Transverse colon (tissue), 4 donors: ENCODE measurements at regions of chr15 and their contacts with region 1.

Region 1: DNA sequence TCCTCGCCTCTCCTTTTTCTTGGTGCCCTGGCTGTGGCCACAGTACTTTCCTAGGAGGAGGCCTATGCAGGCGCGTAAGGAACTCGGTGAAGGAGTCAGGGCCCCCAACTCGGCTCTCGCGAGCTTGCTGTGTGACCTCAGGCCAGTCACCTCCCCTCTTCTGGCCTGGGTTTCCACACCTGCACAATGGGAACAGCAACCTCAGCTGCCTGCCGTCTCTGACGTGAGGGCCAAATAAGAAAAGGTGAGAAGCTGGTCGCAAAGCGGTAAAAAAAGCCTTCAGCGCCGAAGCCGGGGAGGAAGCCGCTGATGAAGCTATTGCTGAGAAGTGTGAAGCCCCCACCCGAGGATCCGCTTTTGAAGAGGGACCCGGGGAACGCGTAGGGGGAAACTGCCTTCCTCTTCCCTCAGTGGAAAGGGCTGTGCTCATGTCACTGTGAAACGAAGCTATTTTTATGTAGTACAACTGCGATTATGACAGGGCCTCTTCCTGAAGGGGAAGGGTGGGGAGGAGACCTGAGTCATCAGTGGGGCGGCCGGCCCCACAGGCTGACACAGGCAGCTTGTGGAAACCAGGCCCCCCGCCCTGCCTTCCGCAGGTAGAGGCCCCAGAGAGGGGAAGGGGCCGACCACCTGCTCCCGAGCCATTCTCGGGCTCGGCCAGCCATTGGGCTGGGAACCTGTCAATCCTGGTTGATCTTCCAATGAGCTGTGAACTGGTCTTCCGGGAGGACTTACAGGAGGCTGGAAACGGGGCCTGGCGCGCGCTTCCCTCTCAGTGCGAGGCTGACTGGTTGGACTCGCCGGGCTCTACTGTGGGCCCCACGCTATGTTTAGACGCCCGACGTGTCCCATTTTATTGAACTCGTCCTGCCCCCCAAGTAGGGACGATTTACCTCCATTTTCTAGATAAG is 18.0 kb upstream of the ANKDD1A start:
- DNase-seq: peak; percentile 92
- H3K4me3 ChIP-seq: peak overlapping the region in 2 of 4 donors; percentile 9
- H3K27ac ChIP-seq: peak overlapping the region; percentile 79 to 90 (median 86)
- H3K4me1 ChIP-seq: peaks cover 8 to 58% (median 15%) of the 10 kb centered on the region in 4 donors
- H3K27me3 ChIP-seq: no peaks in the 10 kb centered on the region
- CTCF ChIP-seq: no peak
- EP300 ChIP-seq: no peak
- POLR2A ChIP-seq: peak; percentile 61

Region 2: DNA sequence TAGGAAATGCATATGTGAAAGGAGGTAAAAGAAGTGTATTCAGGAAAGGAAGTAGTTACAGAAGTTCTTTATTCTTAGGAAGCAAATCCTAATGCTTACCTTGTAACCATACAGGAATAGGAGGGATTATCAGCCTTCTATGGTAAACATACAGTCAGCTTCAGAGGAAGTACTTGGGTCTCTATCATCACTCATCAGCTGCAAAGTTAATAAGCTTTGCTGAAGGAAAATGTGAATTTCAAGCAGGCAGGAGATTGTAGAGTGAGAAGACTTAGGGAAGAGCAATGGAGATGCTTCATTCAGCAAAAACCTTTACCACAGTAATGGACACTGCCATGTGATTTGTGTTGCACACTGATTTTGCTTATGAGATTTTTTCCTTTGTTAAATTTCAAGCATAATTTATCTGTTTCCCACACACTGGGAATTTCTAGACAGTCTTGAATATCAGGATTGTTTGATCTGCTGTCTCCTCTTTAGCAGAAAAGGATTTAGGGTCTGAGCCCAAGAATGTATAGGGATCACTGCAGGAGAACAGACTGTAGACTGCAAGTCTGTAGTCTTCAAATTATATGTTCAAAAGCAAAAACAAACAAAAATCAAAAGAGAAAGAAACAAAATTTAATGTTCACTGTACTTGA is 282.5 kb before region 1 on chr15:
- in situ Hi-C with region 1: no loop called
- intact Hi-C with region 1: no loop called
- DNase-seq: no peak
- H3K4me3 ChIP-seq: no peak overlapping the region
- H3K27ac ChIP-seq: no peak overlapping the region
- H3K4me1 ChIP-seq: peaks cover 0 to 14% (median 3%) of the 10 kb centered on the region in 4 donors
- H3K27me3 ChIP-seq: no peaks in the 10 kb centered on the region
- CTCF ChIP-seq: no peak
- EP300 ChIP-seq: no peak
- POLR2A ChIP-seq: no peak

Region 3: DNA sequence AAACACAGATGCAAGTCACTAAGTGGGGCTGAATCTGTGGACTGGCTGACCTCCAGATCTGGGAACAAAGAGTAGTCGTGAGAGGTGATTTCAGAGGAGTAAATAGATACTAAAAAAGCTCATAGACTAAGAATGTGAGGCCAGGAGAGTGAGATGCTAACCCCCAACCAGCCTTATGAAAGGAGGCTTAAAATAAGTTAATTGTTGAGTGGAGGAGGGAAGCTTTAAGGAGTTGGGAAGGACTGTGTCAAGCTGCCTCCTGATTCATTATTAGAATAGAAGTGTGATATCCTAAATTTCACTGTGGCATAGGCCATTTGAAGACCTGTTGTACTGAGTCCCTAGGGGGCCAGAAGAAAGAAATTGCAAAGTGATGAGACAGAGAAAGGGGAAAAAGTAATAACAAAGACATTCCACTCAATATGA is 226.0 kb before region 1 on chr15:
- in situ Hi-C with region 1: no loop called
- intact Hi-C with region 1: no loop called
- DNase-seq: no peak
- H3K4me3 ChIP-seq: no peak overlapping the region
- H3K27ac ChIP-seq: no peak overlapping the region
- H3K4me1 ChIP-seq: peaks cover 0 to 15% (median 4%) of the 10 kb centered on the region in 4 donors
- H3K27me3 ChIP-seq: no peaks in the 10 kb centered on the region
- CTCF ChIP-seq: no peak
- EP300 ChIP-seq: no peak
- POLR2A ChIP-seq: no peak

Region 4: DNA sequence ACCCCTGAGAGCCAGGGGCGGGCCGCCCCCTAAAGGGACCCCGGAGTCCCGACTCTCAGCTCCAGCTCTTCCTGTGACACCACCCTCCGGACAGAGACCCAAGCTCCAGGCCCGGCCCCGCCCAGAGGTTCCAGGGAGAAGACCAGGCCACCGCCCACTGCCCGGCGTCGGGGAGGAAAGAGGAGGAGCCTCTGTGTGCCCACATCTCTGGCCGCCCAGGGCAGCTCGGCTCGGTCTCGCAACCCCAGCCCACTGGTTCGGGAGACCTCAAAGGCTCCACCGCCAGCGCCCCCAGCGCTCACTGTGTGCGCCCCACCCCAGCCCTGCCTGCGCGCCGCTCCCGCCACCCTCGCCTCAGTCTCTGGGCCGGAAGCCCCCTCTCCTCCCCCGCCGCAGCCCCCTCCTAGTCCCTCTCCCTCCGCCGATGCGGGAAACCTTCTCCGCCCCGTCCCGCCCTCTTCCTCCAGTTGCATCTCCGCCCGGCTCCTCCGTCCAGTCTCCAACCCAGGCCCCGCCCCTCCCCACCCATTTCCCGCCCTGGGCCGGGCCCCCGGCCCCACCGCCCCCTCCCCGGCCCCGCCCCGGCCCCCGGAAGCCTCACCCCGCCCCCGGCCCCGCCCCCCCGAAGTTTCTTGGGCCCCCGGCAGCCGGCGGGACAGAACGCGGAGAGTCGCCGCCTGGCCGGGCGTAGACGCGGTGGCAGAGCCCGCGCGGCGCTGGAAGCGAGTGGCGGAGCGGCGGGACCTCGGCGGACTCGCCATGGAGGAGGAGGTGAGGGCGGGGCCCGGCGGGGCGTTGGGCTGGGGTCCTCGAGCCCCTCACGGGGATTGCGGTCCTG is 52.3 kb before region 1 on chr15 and contains the start of gene PLEKHO2:
- in situ Hi-C with region 1: loop called in 1 of 4 experiments (anchors 10 kb)
- intact Hi-C with region 1: no loop called
- DNase-seq: peak; percentile 95
- H3K4me3 ChIP-seq: peak within 1 kb of the TSS; percentile 69 to 100 (median 88)
- H3K27ac ChIP-seq: peak within 1 kb of the TSS; percentile 89 to 96 (median 94)
- H3K4me1 ChIP-seq: peaks cover 11 to 48% (median 26%) of the 10 kb centered on the region in 4 donors
- H3K27me3 ChIP-seq: peaks cover 3% of the 10 kb centered on the region
- CTCF ChIP-seq: peak in 1 of 5 experiments; percentile 6
- EP300 ChIP-seq: no peak
- POLR2A ChIP-seq: peak; percentile 72
- total RNA-seq, gene PLEKHO2: 4.6 to 12.3 (median 9.8) TPM

Region 5: DNA sequence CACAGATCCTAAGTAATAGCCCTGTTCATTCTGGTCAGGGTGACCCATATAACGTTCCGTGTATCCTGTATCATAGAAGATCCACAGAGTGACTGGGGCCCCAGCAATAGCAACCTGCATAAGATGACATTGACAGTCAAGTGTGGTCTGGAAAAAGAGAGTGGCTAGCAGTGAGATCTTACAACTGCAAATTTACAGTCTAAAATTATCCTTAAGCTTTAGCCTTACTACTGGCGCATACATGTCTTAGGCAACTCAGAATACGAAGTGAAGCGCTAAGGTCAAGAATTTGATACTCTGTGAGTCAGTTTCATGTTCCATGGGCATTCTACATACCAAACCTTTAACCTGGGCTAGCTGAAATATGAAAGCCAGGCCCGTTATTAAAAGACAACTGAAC is 558.3 kb after region 1 on chr15:
- in situ Hi-C with region 1: no loop called
- intact Hi-C with region 1: no loop called
- DNase-seq: no peak
- H3K4me3 ChIP-seq: no peak overlapping the region
- H3K27ac ChIP-seq: no peak overlapping the region
- H3K4me1 ChIP-seq: no peaks in the 10 kb centered on the region
- H3K27me3 ChIP-seq: no peaks in the 10 kb centered on the region
- CTCF ChIP-seq: no peak
- EP300 ChIP-seq: no peak
- POLR2A ChIP-seq: no peak

Region 6: DNA sequence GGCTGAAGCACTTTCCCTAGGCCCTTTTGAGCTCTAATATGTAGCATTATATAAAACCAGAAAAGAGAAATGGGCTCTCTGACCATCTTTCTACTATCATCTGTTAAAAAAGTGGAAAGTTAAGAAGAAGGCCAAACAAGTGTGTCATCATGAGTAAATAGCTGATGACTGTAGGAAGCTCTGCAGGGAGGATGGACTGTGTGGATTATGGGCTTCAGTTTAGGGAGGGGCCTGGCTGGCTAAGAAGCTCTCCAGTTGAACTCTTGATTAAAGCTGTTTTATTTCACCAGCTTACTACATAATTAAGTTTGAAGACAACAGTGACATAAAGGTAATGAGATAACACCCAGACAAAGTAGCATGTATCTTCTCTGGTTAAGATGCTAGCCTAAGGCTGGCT is 686.5 kb after region 1 on chr15:
- in situ Hi-C with region 1: no loop called
- intact Hi-C with region 1: no loop called
- DNase-seq: no peak
- H3K4me3 ChIP-seq: no peak overlapping the region
- H3K27ac ChIP-seq: no peak overlapping the region
- H3K4me1 ChIP-seq: no peaks in the 10 kb centered on the region
- H3K27me3 ChIP-seq: no peaks in the 10 kb centered on the region
- CTCF ChIP-seq: no peak
- EP300 ChIP-seq: no peak
- POLR2A ChIP-seq: no peak